HEK293 (cell line): ENCODE measurements at regions of chr7 and their contacts with region 1.

Region 1: DNA sequence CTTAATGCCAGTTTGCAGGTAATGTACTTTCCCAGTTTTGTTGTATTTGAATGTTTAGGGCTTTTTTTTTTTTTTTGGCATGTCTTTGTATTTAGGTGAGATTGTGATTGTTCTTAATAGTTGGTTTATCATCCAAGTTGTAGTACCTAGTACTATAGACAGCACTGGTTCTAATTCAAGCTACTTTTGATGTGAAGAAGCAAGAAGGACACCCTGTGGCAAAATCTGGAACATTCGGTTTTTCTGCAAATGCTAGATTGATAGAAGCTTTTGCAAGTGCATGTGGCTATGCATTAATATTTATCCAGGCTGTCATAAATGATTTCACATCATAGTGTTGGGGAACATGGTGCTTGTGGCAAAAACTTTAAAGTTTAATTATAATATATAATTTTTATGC is 248.9 kb downstream of the FOXP2 start:
- H3K4me3 ChIP-seq: no peak overlapping the region
- H3K27ac ChIP-seq: no peak overlapping the region
- H3K4me1 ChIP-seq: peaks cover 19% of the 10 kb centered on the region
- CTCF ChIP-seq: peak; percentile 46; the same call in 1 of the 2 replicates

Region 2: GRCh38 chr7:114081606-114082425 is 581.7 kb before region 1 on chr7:
- CTCF ChIA-PET with region 1: interaction called, 10 read pairs
- POLR2A ChIA-PET with region 1: no interaction called
- H3K4me3 ChIP-seq: no peak overlapping the region
- H3K27ac ChIP-seq: no peak overlapping the region
- H3K4me1 ChIP-seq: no peaks in the 10 kb centered on the region
- CTCF ChIP-seq: no peak

Region 3: DNA sequence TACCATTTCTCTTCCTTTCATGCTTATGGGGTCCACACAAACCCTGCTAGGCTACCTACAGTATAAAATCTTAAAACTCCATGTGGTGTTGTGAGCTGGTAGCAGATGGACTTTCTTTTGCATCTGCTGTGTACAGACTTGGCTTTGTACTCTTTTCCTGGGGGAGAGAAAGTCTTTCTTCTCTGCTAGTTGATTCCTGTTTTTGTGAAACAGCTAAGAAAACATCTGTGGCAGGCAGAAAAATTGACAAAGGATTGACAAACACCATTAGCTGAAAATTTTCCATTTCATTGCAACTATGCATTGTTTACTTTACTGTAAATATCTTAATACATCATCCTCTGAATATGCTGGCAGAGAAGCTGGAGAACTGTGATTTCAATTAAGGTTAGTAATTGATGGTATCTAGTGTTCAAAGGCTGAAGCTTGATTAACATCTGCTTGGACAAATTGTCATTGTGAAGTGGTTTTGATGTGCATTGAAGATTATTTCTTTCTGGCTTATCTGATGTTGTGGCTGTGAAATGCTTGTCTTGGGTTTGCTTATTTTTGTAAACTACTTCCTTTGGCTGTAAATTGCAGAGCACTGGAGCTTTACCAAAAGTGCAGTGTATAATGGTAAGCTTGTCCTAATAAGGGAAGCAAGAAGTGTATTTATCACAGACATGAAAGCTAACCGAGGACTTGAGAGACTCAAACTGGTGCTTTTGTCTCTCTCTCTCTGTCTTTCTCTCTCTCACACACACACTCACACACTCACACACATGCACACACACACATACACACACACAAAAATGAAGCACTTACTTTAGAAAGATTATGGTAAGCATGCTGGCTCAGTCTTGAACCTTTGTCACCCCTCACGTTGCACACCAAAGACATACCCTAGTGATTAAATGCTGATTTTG is 249.1 kb before region 1 on chr7 and contains the start of gene FOXP2:
- CTCF ChIA-PET with region 1: interaction called, 8 read pairs
- POLR2A ChIA-PET with region 1: interaction called, 12 read pairs
- H3K4me3 ChIP-seq: peak within 1 kb of the TSS; percentile 40
- H3K27ac ChIP-seq: peak within 1 kb of the TSS; percentile 90
- H3K4me1 ChIP-seq: peaks cover 27% of the 10 kb centered on the region
- CTCF ChIP-seq: no peak

Region 4: DNA sequence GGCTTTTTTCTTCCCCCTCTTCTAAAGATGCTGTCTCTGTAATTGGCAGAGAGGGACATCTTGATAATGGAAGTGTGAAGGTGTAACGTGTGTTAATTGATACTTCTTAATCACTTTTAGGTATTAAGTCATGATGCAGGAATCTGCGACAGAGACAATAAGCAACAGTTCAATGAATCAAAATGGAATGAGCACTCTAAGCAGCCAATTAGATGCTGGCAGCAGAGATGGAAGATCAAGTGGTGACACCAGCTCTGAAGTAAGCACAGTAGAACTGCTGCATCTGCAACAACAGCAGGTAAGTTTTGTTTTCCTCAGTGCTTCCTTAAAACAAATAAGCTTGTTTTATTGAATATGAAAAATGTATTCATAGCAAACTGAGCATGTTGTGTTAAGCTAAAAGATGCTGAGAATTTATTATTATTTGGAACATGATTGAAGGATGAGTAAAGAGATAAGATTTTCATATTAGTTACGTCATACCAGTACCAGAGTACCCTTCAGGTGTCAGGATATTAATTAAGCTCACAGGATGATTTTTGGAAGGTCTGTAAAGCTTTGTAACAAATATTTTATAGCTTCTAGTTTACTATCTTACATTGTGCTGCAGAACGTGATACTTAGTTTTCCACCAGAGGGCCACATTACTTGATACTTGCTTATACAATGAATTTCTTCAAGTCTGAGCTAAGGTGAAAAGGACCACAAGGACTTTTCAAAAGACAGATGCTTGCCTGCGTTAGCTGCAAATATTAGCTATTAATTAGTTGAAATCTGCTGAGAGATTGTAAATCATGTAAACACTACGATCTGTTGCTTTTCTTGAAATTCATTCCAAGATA is 236.9 kb before region 1 on chr7:
- CTCF ChIA-PET with region 1: interaction called, 39 read pairs
- POLR2A ChIA-PET with region 1: no interaction called
- H3K4me3 ChIP-seq: no peak overlapping the region
- H3K27ac ChIP-seq: no peak overlapping the region
- H3K4me1 ChIP-seq: no peaks in the 10 kb centered on the region
- CTCF ChIP-seq: no peak

Region 5: DNA sequence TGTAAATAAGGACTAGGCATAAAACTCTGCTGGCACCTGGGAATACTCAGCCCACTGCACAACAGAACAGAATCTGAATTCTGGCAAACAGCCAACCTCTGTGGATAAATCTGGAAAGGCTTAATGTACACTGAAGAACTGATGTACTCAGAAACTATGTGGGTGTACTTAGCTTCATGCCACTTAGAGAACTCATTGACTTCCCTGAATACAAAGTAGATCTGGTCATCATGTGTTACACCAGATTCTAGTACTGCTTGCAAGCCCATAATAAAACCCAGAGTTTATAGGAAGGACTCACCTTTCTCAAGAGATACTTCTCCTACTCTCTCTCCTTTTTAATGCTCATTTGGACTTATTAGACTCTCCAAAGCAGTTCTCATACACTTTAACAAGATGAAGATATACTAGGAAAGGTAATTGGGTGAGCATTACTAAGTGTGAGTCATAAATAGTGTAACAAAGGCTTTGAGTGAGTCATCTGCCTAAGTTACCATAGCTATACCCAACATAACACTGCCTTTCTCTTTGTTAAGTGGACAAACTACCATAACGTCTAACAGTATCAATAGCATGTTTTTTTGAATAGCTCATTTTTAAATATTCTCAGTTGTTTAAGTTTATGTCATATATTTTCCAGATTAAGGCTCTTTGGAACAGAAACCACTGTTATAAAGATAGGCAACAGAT is 567.5 kb after region 1 on chr7:
- CTCF ChIA-PET with region 1: no interaction called
- POLR2A ChIA-PET with region 1: no interaction called
- H3K4me3 ChIP-seq: no peak overlapping the region
- H3K27ac ChIP-seq: no peak overlapping the region
- H3K4me1 ChIP-seq: peaks cover 12% of the 10 kb centered on the region
- CTCF ChIP-seq: no peak